WTC11 (cell line): ENCODE measurements at regions of chr1 and their contacts with region 1.

Region 1: DNA sequence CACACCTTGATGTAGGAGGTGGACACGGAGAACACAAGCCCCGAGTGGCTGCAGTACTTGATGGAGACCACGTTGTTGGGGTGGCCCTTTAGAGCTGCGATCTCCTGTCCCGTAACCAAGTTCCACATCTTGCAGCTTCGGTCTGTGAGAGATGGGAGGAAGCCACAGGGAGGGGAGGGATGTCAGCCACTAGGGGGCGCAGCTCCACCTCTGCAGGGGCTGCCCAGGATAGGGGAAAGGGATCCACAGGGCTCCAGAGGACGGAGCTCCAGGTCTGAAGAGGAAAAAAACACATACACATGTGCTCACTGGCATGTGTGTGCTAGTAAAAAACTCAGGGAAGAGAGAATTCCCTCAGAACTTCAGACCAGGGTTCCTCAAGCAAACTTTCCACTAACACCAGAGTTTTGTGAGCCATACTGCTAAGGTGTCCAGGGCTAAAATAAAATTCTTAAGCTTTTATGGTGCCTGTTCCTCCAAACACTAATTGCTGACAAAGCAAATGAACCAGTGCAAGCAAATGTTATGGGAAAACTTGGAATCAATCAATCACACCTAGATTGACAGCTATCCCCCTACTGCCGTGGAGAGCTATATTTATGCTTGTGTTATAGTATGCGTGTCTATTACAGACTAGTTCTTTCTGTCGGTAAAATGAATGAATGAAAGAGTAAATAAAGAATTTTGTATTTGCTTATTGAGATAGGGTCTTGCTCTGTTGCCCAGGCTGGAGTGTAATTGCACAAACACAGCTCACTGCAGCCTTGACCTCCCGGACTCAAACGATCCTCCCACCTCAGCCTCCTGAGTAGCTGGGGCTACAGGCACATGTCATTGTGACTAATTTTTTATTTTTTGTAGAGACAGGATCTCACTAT is 43.7 kb downstream of the KIF21B start:
- DNase-seq: peak; percentile 90
- ATAC-seq: peak; percentile 97
- H3K4me3 Mint-ChIP-seq: no peak overlapping the region
- H3K27ac Mint-ChIP-seq: no peak overlapping the region
- H3K4me1 Mint-ChIP-seq: no peaks in the 10 kb centered on the region
- H3K27me3 Mint-ChIP-seq: no peaks in the 10 kb centered on the region; the same call in 1 of the 2 replicates
- CTCF ChIP-seq: peak; percentile 87

Region 2: GRCh38 chr1:200699871-200700270 is 279.9 kb before region 1 on chr1:
- CTCF ChIA-PET with region 1: no interaction called
- POLR2A ChIA-PET with region 1: no interaction called
- DNase-seq: no peak
- ATAC-seq: peak; percentile 78
- H3K4me3 Mint-ChIP-seq: no peak overlapping the region
- H3K27ac Mint-ChIP-seq: 0 out of 2 replicates have a peak overlapping the region, but pooled peaks have one; percentile 25
- H3K4me1 Mint-ChIP-seq: peaks cover 4% of the 10 kb centered on the region
- H3K27me3 Mint-ChIP-seq: no peaks in the 10 kb centered on the region
- CTCF ChIP-seq: no peak

Region 3: GRCh38 chr1:200899451-200899915 is 80.3 kb before region 1 on chr1:
- CTCF ChIA-PET with region 1: no interaction called
- POLR2A ChIA-PET with region 1: no interaction called
- DNase-seq: no peak
- ATAC-seq: no peak
- H3K4me3 Mint-ChIP-seq: no peak overlapping the region
- H3K27ac Mint-ChIP-seq: peak overlapping the region; percentile 47; the same call in 1 of the 2 replicates
- H3K4me1 Mint-ChIP-seq: peaks cover 35% of the 10 kb centered on the region
- H3K27me3 Mint-ChIP-seq: no peaks in the 10 kb centered on the region
- CTCF ChIP-seq: no peak

Region 4: DNA sequence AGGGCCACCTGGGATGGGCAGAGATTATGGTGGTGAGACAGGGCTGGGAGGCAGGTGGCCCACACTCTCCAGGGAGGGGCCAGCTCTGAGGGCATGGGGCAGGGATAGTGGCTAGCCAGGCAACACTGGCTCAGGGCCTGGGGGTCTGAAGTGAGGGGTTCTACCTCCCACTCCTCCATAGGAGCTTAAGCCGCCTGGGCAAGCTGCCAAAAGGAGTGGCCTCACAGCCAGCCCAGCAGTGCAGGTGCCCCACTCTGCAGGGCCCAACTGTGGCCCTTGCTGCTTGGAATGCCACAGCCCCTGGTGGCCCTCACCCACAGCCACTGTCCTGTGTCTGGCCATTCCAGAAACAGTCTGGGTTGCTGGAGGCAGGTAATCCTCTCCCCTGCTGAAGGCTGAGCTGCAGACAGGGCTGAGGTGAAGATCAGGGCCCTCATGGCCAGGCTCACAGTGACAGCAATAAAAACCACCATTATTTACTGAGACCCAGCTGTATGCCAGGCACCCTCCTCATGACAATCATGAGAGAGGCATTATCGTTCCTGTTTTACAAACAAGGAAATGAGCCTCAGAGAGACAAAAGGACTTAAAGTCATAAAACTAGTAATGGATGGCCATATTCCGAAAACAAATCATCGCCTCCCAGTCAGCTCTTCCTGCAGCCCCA is 12.7 kb after region 1 on chr1:
- CTCF ChIA-PET with region 1: interaction called, 46 read pairs
- POLR2A ChIA-PET with region 1: no interaction called
- DNase-seq: no peak
- ATAC-seq: no peak
- H3K4me3 Mint-ChIP-seq: no peak overlapping the region
- H3K27ac Mint-ChIP-seq: no peak overlapping the region
- H3K4me1 Mint-ChIP-seq: no peaks in the 10 kb centered on the region
- H3K27me3 Mint-ChIP-seq: no peaks in the 10 kb centered on the region; the same call in 1 of the 2 replicates
- CTCF ChIP-seq: no peak

Region 5: DNA sequence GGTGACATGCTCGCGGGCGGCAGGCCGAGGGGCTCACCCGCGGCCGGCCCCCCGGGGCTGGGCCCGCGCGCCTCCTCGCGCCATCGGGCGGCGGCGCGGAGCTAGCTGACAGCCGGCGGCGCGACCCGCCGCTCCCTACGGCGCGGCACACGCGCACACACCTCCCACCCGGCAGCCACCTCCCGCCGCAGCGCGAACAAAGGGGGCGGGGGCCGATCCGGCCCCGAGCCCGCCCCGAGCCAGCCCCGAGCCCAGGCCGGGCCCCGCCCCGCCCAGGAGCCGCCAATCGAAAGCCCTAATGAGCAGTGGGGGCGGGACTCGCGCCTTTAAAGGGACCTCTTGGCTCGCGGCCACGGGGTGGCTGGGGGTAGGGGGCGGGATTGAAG is 43.7 kb after region 1 on chr1 and contains the start of gene KIF21B:
- CTCF ChIA-PET with region 1: interaction called, 218 read pairs
- POLR2A ChIA-PET with region 1: interaction called, 3 read pairs
- DNase-seq: peak; percentile 90
- ATAC-seq: peak; percentile 82
- H3K4me3 Mint-ChIP-seq: peak within 1 kb of the TSS; percentile 79
- H3K27ac Mint-ChIP-seq: no peak within 1 kb of the TSS
- H3K4me1 Mint-ChIP-seq: peaks cover 65% of the 10 kb centered on the region
- H3K27me3 Mint-ChIP-seq: peaks cover 7% of the 10 kb centered on the region
- CTCF ChIP-seq: no peak
- total RNA-seq, gene KIF21B: 17.8 to 19.4 TPM (median 18.0 TPM) in 3 replicates

Region 6: DNA sequence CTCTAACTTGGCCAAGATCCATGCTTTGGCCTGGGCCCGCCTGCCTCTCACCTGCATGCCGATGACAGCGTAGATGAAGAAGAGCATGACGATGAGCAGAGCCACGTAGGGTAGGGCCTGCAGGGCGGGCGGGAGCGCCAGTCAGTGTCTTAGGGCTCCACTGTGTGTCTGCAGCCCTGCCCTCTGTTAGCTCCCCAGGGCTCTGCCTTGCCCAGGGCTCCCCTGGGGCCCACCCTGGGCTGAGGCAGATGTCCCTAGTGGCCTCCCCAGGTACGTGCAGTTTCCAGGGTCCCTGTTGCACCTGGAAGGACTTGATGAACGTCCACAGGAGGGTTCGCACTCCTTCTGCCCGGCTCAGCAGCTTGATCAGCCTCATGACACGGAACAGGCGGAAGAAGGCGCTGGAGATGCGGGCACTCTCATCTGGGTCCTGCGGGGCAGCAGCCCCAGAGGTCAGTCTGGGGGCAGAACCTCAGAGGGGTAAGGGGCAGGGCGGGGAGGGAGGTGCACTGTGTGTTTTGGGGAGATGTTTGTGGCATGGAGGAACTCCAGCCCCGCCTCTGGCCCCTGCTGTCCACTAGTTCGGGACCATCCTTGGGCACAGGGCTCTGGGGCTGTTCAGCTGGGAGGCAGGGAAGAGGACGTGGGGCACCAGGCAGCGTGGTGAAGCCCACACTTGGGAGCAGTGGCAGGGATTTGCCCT is 73.5 kb after region 1 on chr1:
- CTCF ChIA-PET with region 1: interaction called, 13 read pairs
- POLR2A ChIA-PET with region 1: no interaction called
- DNase-seq: peak; percentile 45
- ATAC-seq: peak; percentile 75
- H3K4me3 Mint-ChIP-seq: no peak overlapping the region
- H3K27ac Mint-ChIP-seq: no peak overlapping the region
- H3K4me1 Mint-ChIP-seq: peaks cover 9% of the 10 kb centered on the region
- H3K27me3 Mint-ChIP-seq: no peaks in the 10 kb centered on the region
- CTCF ChIP-seq: no peak

Region 7: GRCh38 chr1:201114236-201115131 is 134.7 kb after region 1 on chr1:
- CTCF ChIA-PET with region 1: interaction called, 50 read pairs
- POLR2A ChIA-PET with region 1: interaction called, 3 read pairs
- DNase-seq: peak; percentile 95
- ATAC-seq: peak; percentile 92
- H3K4me3 Mint-ChIP-seq: peak overlapping the region; percentile 73
- H3K27ac Mint-ChIP-seq: no peak overlapping the region
- H3K4me1 Mint-ChIP-seq: peaks cover 8% of the 10 kb centered on the region
- H3K27me3 Mint-ChIP-seq: peaks cover 62% of the 10 kb centered on the region
- CTCF ChIP-seq: peak; percentile 65